ENCODE measurements at regions of chr19 and their contacts with region 1.

Region 1: GRCh38 chr19:50025024-50025789 is at the start of gene VRK3:
- DNase-seq: peak; percentile 99
- ATAC-seq: peak; percentile 99
- H3K4me3 ChIP-seq: peak within 1 kb of the TSS; percentile 93 to 99 (median 96)
- H3K27ac ChIP-seq: peak within 1 kb of the TSS; percentile 90 to 98 (median 94)
- H3K4me1 ChIP-seq: peaks cover 24 to 27% of the 10 kb centered on the region in 2 donors
- H3K27me3 ChIP-seq: no peaks in the 10 kb centered on the region
- CTCF ChIP-seq: no peak
- POLR2A ChIP-seq: peak; percentile 56 to 77
- total RNA-seq, gene VRK3: 36.0 to 52.8 (median 39.9) TPM

Region 2: GRCh38 chr19:49929611-49930482 is 95.4 kb before region 1 on chr19:
- in situ Hi-C with region 1: no loop called
- intact Hi-C with region 1: loop called (anchors 1 kb)
- DNase-seq: peak; percentile 91 to 95
- ATAC-seq: peak; percentile 91 to 95
- H3K4me3 ChIP-seq: peak overlapping the region; percentile 80 to 97 (median 92)
- H3K27ac ChIP-seq: peak overlapping the region; percentile 95 to 98 (median 96)
- H3K4me1 ChIP-seq: peaks cover 24 to 29% of the 10 kb centered on the region in 2 donors
- H3K27me3 ChIP-seq: no peaks in the 10 kb centered on the region
- CTCF ChIP-seq: peak in 1 of 5 experiments; percentile 29
- POLR2A ChIP-seq: peak; percentile 67 to 86

Region 3: GRCh38 chr19:50003810-50004419 is 21.3 kb before region 1 on chr19:
- in situ Hi-C with region 1: no loop called
- intact Hi-C with region 1: loop called (anchors 2 kb)
- DNase-seq: peak; percentile 63 to 85
- ATAC-seq: peak; percentile 99 to 100
- H3K4me3 ChIP-seq: peak overlapping the region in 2 of 4 donors; percentile 7 to 25
- H3K27ac ChIP-seq: peak overlapping the region; percentile 84 to 93 (median 87)
- H3K4me1 ChIP-seq: peaks cover 12 to 19% of the 10 kb centered on the region in 2 donors
- H3K27me3 ChIP-seq: no peaks in the 10 kb centered on the region
- CTCF ChIP-seq: no peak
- POLR2A ChIP-seq: peak in 1 of 2 donors; percentile 43

Region 4: DNA sequence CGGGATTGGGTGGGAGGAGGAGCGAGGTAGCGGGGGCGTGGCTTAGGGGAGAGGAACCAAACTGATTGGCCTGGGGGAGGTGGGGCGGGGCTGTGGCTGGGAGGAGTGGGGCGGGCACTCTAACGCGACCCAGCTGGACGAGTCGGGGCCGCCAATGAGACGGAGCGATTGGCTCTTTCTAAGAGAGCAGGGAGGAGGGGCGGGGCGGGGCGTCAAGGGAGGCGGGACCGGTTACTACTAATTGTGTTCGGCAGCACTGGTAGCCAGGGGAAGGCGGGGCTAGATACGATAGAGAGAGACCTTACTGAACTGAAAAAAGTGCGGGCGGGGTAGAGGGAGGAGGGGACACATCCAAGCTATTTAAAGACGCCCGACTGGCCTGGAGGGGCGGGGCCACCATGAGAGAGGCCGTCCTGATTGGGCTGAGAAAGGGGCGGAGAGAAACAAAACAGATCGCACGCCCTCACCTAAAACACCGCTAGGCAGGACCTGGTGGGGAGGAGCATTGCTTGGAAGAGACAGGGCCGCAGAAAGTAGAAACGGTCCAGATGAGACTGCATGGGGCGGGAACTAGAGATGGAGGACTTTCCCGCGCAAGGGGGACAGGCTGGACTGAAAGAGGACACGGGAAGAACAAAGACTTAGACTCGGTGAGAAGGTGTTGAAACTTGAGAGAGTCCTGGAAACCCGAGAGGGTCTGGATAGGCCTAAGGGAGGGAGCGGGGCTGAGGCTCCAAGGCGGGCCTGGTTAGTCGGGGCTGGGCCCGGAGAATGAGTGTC is 304.1 kb after region 1 on chr19 and contains the start of gene KCNC3:
- in situ Hi-C with region 1: no loop called
- intact Hi-C with region 1: loop called (anchors 1 kb)
- DNase-seq: peak; percentile 100
- ATAC-seq: peak; percentile 77 to 78
- H3K4me3 ChIP-seq: peak within 1 kb of the TSS; percentile 52 to 61 (median 55)
- H3K27ac ChIP-seq: peak within 1 kb of the TSS; percentile 79 to 94 (median 90)
- H3K4me1 ChIP-seq: peaks cover 38 to 45% of the 10 kb centered on the region in 2 donors
- H3K27me3 ChIP-seq: peaks cover 18 to 29% (median 23%) of the 10 kb centered on the region in 3 donors
- CTCF ChIP-seq: no peak
- POLR2A ChIP-seq: peak; percentile 86
- total RNA-seq, gene KCNC3: 0.25 to 1.4 (median 0.53) TPM

Measured in gastrocnemius medialis (tissue), 4 donors.